Right ventricle myocardium inferior (tissue), 1 donor: ENCODE measurements at regions of chr19 and their contacts with region 1.

Region 1: GRCh38 chr19:10194500-10195289 is at the start of gene DNMT1:
- DNase-seq: peak; percentile 96
- ATAC-seq: peak; percentile 97
- total RNA-seq, gene DNMT1: 26.0 TPM

Region 2: DNA sequence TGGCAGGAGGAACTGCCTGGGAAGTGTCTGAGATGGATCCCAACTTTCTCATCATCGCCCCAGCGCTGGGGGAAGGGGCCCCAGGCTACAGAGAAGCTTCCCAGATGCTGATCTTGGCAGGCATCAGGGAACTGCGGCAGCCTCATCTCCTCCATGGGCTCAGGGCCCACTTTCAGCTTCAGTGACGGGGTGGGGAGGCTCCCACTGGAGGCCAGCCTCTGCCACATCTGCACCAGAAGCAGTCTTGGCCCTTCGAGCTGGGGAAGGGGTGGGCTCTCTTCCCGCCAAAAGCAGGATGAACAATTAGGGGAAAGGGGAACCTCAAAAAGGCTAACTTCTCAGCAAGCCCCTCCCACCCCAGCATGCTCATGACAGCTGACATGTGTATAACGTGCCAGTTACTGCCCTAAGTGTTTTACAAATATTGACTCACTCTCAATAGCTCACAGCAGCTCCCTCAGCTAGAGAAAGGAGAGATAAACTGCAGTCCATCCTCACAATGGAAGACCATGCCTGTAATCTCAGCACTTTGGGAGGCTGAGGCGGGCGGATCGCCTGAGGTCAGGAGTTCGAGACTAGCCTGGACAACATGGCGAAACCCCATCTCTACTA is 43.6 kb after region 1 on chr19:
- intact Hi-C with region 1: loop called (anchors 5 kb)
- DNase-seq: peak; percentile 87
- ATAC-seq: peak; percentile 85

Region 3: GRCh38 chr19:10251792-10252694 is 57.3 kb after region 1 on chr19 and contains the start of gene MRPL4:
- intact Hi-C with region 1: loop called (anchors 2 kb)
- DNase-seq: peak; percentile 96
- ATAC-seq: peak; percentile 94
- total RNA-seq, gene MRPL4: 70.1 TPM